PC-9 (cell line): ENCODE measurements at regions of chr18 and their contacts with region 1.

Region 1: DNA sequence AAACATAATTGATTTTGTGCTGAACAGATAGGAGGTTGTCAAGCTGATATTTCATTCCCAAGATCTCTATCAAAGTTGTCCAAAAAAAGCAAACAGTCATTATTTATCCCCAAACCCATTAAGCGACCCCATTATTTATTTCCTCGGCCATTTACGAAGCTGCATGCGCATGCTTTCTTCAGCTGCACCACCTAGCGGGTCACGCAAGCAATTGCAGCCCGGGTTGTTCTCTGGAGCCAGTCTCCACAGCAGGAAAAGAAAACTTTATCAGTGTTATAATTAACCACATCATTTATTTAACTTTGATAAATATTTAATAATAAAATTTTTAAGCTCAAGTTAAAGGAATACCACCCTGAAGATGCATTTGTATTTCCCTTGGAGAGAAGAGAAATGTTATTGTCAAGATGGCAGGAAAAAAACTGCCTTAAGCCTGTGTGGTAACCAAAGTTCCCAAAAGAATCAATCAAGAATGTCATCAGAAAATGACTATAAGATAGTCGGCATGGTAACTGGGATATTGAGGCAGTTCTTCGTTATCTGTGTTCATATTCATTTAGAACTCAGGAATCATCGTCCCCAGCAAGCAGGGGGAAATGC is 304.7 kb downstream of the FBXO15 start:
- DNase-seq: peak in 1 of 2 experiments; percentile 31
- H3K4me3 ChIP-seq: peak overlapping the region; percentile 37; the same call in 1 of the 2 replicates
- H3K27ac ChIP-seq: no peak overlapping the region
- H3K4me1 ChIP-seq: peaks cover 22% of the 10 kb centered on the region
- H3K27me3 ChIP-seq: no peaks in the 10 kb centered on the region
- CTCF ChIP-seq: peak; percentile 99

Region 2: DNA sequence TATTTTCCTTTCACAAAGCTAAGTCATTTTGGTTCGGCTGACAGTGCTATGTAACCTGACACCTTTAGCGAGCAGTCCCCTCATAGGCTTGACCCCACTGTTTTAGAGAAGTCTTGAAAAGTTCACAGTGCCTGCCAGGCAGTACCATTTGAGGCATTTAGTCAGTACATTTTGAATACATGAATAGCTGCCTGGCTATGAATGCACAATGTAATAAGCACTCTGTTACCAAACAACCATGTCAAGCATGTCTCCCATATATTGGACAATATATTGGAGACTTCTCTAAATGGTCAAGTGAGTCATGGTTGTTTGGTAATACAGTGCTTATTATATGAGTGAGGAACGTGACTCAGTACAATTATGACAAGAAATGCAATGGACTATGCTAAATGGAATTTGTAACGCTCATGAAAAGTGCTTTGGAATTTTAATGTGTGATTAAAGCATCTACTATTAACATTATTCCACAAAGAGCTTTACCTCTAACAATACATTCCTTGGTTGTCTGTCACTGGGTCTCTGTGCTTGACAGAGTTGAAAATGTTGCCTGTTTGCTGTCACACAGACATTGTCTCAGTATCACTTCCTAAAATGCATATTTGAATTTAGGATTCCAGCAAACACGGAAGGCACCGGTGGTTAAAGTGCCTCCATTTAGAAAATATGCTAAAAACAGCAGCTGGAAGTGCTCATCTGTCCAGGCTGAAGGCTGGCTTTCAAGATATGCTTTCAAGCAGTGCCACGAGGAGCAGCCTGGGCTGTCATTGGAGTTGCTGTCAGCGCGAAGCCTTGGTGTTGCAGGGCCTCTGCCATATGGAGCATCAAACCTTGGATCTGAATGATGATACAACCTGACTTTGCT is 153.8 kb before region 1 on chr18:
- CTCF ChIA-PET with region 1: no interaction called
- POLR2A ChIA-PET with region 1: no interaction called
- intact Hi-C with region 1: loop called (anchors 10 kb)
- DNase-seq: peak in 1 of 2 experiments; percentile 72
- H3K4me3 ChIP-seq: no peak overlapping the region
- H3K27ac ChIP-seq: no peak overlapping the region
- H3K4me1 ChIP-seq: peaks cover 12% of the 10 kb centered on the region
- H3K27me3 ChIP-seq: no peaks in the 10 kb centered on the region
- CTCF ChIP-seq: no peak

Region 3: GRCh38 chr18:74116633-74117554 is 274.0 kb after region 1 on chr18:
- CTCF ChIA-PET with region 1: no interaction called
- POLR2A ChIA-PET with region 1: no interaction called
- intact Hi-C with region 1: loop called (anchors 10 kb)
- DNase-seq: no peak
- H3K4me3 ChIP-seq: no peak overlapping the region
- H3K27ac ChIP-seq: no peak overlapping the region
- H3K4me1 ChIP-seq: no peaks in the 10 kb centered on the region
- H3K27me3 ChIP-seq: no peaks in the 10 kb centered on the region; the same call in 1 of the 2 replicates
- CTCF ChIP-seq: peak; percentile 86